Kidney (tissue), 22 donors: ENCODE measurements at regions of chr2 and their contacts with region 1.

Region 1: DNA sequence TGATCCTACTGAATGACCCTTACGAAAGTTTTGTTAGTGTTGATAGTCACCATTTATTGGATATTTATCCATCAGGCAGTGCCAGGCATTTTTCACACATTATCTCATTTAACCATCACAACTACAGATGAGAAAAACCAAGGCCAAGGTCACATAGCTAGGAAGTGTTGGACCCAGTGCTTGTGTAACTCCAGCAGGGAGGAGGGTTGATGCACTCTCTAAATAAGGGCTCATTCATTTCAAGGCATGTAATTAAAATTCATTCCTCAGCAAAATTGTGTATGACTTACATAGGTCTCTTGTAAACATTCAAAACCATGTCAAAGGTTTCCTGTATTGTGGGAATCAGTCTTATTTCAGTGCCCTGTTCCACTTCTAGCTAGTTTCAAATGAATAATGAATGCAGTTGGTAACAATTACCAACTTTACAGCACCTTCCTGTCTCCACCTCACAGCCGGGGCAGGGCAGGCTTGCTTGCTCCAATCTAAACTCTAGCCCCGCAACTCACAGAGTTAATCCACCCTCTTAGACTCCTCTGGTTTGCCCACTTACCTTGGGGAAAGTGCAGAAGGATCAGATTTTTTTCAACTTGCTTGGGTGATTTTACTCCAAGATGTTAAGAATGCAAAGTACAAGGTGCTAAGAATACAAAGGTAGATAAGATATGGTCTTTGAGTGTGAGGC is 5.8 kb upstream of the MAPRE3 start:
- DNase-seq: no peak
- H3K4me3 ChIP-seq: no peak overlapping the region
- H3K27ac ChIP-seq: no peak overlapping the region
- H3K4me1 ChIP-seq: no peaks in the 10 kb centered on the region
- H3K27me3 ChIP-seq: no peaks in the 10 kb centered on the region
- CTCF ChIP-seq: no peak

Region 2: DNA sequence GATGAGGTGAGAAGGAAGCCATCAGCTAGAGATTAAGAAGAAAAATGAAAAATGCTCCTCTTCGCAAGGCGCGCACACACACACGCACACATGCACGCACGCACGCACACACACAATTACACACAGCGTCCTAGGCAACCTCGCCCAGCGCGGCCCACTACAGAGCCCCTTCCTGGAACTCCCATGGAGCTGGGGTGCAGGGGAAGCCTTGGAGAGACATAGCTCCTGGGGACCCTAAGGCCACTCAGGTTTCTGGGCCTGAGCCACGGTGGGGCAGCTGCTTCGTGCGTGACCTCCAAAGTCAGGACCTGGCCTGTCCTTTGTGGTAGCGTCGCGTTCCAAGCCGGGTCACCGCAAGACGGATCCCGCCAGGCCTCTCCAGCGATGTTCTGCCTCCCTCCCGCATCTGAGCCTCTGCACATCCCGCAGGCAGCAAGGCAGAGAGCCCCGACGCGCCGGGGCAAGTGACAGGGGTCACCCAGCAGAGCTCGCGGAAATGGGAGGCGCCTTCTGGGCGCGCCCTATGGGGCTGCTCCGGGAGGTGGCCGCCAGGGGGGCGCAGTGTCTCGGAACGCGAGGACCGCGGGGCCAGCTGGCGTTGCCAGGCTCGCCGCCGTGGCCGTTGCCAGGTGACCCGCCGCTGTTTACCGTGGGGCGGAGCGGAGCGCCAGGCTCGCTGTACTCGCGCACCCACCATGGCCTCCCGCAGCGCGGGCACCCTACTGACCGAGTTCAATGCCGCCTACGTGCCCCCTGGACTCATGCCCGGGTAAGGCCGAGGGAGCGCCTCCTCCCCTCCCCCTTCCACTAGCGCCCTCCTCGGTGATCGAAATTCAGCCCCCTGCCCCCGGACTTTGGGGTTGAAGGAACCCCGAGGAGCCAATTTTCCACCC is 402.4 kb before region 1 on chr2:
- intact Hi-C with region 1: no loop called
- DNase-seq: peak; percentile 86 to 89 (median 86)
- H3K4me3 ChIP-seq: peak overlapping the region in 2 of 3 donors; percentile 20 to 48
- H3K27ac ChIP-seq: no peak overlapping the region
- H3K4me1 ChIP-seq: peaks cover 0 to 10% (median 0%) of the 10 kb centered on the region in 3 donors
- H3K27me3 ChIP-seq: no peaks in the 10 kb centered on the region
- CTCF ChIP-seq: no peak

Region 3: DNA sequence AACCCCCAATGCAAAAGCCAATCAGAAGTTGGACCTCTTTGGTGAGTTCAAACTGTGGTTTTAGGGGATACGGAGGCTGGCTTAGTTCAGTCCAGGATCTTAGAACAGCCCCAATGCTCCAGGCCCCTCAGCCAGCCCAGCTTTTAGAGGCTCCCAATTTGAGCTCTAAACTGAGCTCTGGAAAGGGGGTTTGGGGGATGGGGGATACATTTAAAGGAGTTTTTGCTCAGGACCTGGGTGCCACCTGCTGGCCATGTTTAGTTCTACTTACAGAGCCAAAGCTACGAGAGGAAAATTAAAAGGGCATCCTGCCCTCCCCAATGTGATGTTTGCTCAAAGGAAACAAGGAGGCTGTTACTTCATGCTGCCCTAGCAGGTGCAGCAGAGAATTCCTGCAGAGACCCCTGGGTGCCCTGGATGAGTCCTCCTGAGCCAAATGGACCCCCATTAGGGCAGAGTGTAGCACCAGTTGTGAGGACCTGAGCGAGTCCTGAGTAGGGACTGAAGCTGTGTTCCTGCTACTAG is 52.3 kb after region 1 on chr2:
- intact Hi-C with region 1: loop called (anchors 5 kb)
- DNase-seq: peak in 3 of 5 donors; percentile 48 to 77 (median 69)
- H3K4me3 ChIP-seq: no peak overlapping the region
- H3K27ac ChIP-seq: no peak overlapping the region
- H3K4me1 ChIP-seq: peaks cover 0 to 16% (median 16%) of the 10 kb centered on the region in 3 donors
- H3K27me3 ChIP-seq: no peaks in the 10 kb centered on the region
- CTCF ChIP-seq: peak; percentile 72